ENCODE measurements at regions of chr14 and their contacts with region 1.

Region 1: GRCh38 chr14:70045844-70046535 is 142.8 kb downstream of the SLC8A3 start:
- DNase-seq: peak; percentile 32 to 65
- ATAC-seq: peak; percentile 51 to 81
- H3K4me3 ChIP-seq: no peak overlapping the region
- H3K27ac ChIP-seq: no peak overlapping the region
- H3K4me1 ChIP-seq: no peaks in the 10 kb centered on the region
- H3K27me3 ChIP-seq: no peaks in the 10 kb centered on the region
- CTCF ChIP-seq: peak; percentile 49 to 79 (median 74)
- POLR2A ChIP-seq: no peak

Region 2: DNA sequence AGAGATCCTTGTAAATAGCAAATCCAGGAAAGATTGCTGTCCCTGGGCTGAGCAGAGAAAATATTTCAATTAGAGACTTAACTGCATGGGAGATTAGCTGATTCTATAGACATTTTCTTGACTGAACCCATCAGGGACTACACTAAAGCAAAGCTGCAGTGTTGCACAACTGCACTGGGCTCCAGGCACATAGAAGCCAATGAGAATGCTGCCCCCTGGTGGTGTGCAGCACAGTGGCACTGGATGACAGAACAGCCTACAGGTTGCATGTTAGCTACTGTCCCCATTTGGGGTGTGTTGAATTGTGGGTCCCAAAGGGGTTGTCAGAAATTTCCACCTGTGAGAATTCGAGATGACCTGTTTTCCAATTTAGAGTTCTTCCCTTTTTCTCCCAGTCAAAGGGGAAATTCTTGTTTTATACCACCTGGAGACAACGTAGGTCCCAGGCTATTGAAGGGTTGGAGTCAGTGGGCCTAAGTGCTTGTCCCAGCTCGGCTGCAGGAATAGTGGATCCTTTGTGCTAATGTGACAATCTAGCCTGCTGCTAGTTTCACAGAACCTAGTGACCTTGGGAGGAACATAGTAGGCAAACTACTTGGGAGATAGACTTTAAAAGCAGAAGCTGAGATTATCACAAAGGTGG is 28.1 kb after region 1 on chr14:
- in situ Hi-C with region 1: no loop called
- intact Hi-C with region 1: loop called (anchors 1 kb)
- DNase-seq: peak; percentile 7 to 53
- ATAC-seq: peak in 1 of 2 donors; percentile 72
- H3K4me3 ChIP-seq: no peak overlapping the region
- H3K27ac ChIP-seq: no peak overlapping the region
- H3K4me1 ChIP-seq: peaks cover 5 to 12% of the 10 kb centered on the region in 2 donors
- H3K27me3 ChIP-seq: no peaks in the 10 kb centered on the region
- CTCF ChIP-seq: peak; percentile 51 to 74 (median 66)
- POLR2A ChIP-seq: no peak

Region 3: DNA sequence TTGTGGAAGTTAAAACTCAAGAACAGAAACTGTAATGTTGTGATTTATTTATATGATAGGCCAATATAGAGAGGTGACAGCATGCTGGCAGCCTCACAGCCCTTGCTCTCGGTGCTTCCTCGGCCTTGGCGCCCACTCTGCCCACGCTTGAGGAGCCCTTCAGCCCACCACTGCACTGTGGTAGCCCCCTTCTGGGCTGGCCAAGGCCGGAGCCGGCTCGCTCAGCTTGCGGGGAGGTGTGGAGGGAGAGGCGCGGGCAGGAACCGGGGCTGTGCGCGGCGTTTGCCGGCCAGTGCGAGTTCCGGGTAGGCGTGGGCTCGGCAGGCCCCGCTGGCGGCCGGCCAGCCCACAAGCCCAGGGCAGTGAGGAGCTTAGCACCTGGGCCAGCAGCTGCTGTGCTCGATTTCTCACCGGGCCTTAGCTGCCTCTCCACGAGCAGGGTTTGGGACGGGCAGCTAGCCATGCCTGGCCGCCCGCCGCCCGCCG is 208.5 kb after region 1 on chr14:
- in situ Hi-C with region 1: loop called in 3 of 4 experiments (anchors 5 to 25 kb)
- intact Hi-C with region 1: loop called (anchors 1 kb)
- DNase-seq: peak in 1 of 2 donors; percentile 37
- ATAC-seq: peak in 1 of 2 donors; percentile 64
- H3K4me3 ChIP-seq: peak overlapping the region; percentile 49 to 71 (median 52)
- H3K27ac ChIP-seq: no peak overlapping the region
- H3K4me1 ChIP-seq: no peaks in the 10 kb centered on the region
- H3K27me3 ChIP-seq: peaks cover 0 to 3% (median 0%) of the 10 kb centered on the region in 3 donors
- CTCF ChIP-seq: no peak
- POLR2A ChIP-seq: no peak

Region 4: GRCh38 chr14:70317969-70318634 is 272.1 kb after region 1 on chr14:
- in situ Hi-C with region 1: no loop called
- intact Hi-C with region 1: loop called (anchors 5 kb)
- DNase-seq: no peak
- ATAC-seq: peak; percentile 50 to 64
- H3K4me3 ChIP-seq: no peak overlapping the region
- H3K27ac ChIP-seq: no peak overlapping the region
- H3K4me1 ChIP-seq: no peaks in the 10 kb centered on the region
- H3K27me3 ChIP-seq: no peaks in the 10 kb centered on the region
- CTCF ChIP-seq: peak in 3 of 5 experiments; percentile 10 to 37 (median 21)
- POLR2A ChIP-seq: no peak